T-cell (primary cell): ENCODE measurements at regions of chr4 and their contacts with region 1.

Region 1: GRCh38 chr4:37653601-37654000 is 32.6 kb downstream of the RELL1 start:
- DNase-seq: no peak
- ATAC-seq: no peak
- H3K4me3 ChIP-seq: no peak overlapping the region
- H3K4me3 Mint-ChIP-seq: no peak overlapping the region
- H3K27ac ChIP-seq: no peak overlapping the region
- H3K27ac Mint-ChIP-seq: no peak overlapping the region
- H3K4me1 ChIP-seq: no peaks in the 10 kb centered on the region
- H3K4me1 Mint-ChIP-seq: peaks cover 23 to 33% (median 29%) of the 10 kb centered on the region in 3 donors
- H3K27me3 ChIP-seq: no peaks in the 10 kb centered on the region
- H3K27me3 Mint-ChIP-seq: no peaks in the 10 kb centered on the region

Region 2: DNA sequence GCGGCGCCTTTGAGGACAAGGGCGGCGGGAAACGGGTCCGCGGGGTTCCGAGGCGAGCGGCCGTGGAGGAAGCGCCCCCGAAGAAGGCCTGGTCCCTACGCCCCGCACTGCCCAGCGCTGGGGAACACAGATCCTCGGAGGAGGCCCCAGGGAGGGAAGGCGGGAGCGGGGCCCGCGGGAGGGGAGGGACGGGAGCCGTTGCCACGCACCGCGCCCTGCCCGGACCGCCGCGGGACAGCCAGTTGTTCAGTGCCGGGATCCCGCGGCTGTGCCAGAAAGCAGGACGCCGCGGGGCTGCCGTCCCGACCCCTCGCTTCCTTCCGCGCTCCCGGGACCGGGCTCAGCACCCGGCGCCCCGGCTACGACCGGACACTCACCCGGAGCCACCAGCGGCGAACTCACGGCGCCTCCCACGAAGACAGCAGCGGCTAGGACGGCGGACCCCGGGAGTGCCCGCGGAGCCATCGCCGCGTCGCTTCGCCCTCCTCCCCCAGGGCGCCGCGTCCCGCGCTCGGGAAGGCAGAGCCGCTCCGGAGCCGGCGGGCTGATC is 32.3 kb after region 1 on chr4:
- CTCF ChIA-PET with region 1: interaction called in 1 of 2 experiments, 12 read pairs
- POLR2A ChIA-PET with region 1: interaction called in 1 of 2 experiments, 3 read pairs
- DNase-seq: peak in 25 of 35 experiments; percentile 22 to 61 (median 48)
- ATAC-seq: peak; percentile 8 to 41 (median 28)
- H3K4me3 ChIP-seq: peak overlapping the region; percentile 67 to 81
- H3K4me3 Mint-ChIP-seq: peak overlapping the region; percentile 91 to 95 (median 95)
- H3K27ac ChIP-seq: peak overlapping the region; percentile 82
- H3K27ac Mint-ChIP-seq: peak overlapping the region; percentile 95 to 96
- H3K4me1 ChIP-seq: peaks cover 16 to 35% of the 10 kb centered on the region in 2 experiments
- H3K4me1 Mint-ChIP-seq: peaks cover 35 to 39% (median 36%) of the 10 kb centered on the region in 3 donors
- H3K27me3 ChIP-seq: no peaks in the 10 kb centered on the region
- H3K27me3 Mint-ChIP-seq: no peaks in the 10 kb centered on the region